Caki2 (cell line): ENCODE measurements at regions of chr4 and their contacts with region 1.

Region 1: GRCh38 chr4:173025131-173025530 is 143.5 kb upstream of the GALNT7 start:
- DNase-seq: peak; percentile 61

Region 2: DNA sequence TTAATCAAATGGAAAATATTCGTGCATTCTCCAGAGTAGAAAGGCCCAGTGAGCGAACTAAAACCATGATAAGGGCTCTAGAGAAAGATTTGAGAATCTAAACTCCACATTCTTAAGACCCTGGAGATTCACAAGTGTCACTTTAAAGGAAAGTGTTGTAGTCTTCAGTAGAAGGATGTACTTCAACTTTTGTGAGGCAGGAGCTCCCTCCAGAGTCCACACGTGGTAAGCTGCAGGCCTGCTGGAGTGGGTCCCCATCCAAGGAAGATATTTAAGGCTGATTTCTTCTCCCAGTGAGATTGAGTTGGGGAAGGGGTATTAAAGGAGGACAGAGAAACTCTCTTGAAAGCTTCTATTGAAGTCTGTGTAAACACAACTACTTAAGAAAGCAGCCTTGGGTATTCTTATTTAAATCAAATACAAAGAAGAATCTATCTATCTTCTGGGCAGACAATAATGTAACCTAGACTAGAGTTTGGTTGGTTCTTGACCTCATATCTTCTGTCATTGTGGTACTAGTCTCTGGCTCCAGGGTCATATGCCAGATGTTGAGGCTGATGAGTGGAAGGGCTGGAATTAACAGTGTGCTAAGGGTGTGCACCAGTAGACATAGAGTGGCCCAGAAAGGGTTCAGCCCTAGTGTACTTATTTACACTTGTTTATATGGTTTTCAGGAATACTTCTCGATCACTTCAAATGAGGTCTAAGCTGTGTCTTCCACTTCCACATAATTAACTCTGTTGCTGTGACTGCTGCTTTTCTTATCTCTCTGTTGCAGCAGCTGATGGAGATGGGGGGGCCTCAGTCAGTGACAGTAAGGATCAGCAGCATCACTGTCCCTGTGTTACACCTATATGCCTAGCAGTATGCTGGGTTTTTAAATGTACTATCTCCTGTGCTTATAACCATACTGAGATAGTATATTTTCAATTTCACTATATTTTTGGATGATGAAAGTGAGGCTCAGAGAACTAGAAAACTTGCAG is 232.9 kb after region 1 on chr4:
- in situ Hi-C with region 1: loop called (anchors 25 kb)
- DNase-seq: peak; percentile 47